Right ventricle myocardium inferior (tissue), 1 donor: ENCODE measurements at regions of chr5 and their contacts with region 1.

Region 1: DNA sequence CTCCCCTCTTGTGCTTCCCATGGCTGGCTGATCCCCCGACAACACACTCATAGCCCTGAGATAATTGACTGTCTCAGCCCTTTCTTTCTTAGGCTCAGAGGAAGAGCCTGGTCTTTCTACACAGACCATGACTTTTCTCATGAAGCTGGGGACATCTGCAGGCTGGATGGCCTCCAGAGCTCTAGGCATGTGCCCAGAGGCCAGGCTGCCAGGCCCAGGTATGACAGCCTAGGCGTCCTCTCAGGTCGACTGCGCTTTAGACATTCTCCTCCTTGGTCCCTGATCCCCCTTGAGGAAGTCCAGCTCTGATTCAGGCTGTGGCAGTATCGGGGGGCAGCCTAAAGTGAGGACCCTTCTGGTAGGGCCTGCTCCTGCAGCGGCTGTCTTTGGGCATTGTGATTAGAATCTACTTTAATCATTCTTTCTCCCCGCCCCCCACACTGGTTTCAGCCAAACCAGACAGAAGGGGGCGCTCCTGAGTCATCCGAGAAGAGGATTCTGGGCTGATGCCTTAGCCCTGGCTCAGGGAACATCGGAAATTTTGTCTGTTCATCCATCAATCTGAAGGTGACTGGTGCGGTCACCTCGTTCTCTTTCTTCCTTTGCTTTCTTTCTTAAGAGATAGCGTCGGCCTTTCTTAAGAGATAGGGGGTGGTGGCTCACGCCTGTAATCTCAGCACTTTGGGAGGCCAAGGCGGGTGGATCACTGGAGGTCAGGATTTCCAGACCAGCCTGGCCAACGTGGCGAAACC is 66.5 kb upstream of the HSPA9 start:
- DNase-seq: no peak
- ATAC-seq: peak; percentile 69

Region 2: GRCh38 chr5:138824924-138825863 is 183.5 kb after region 1 on chr5:
- intact Hi-C with region 1: loop called (anchors 10 kb)
- DNase-seq: no peak
- ATAC-seq: peak; percentile 48